Activated naive CD4-positive, alpha-beta T cell treated with anti-CD3 and anti-CD28 coated beads, Interleukin-2, amount 10 ng/mL, durations not matched to agents 7 days and 5 days (primary cell): ENCODE measurements at regions of chr20 and their contacts with region 1.

Region 1: GRCh38 chr20:13819885-13820645 is 35.2 kb downstream of the NDUFAF5 start:
- DNase-seq: peak; percentile 23
- H3K4me3 Mint-ChIP-seq: no peak overlapping the region
- H3K27ac Mint-ChIP-seq: no peak overlapping the region
- H3K4me1 Mint-ChIP-seq: no peaks in the 10 kb centered on the region
- H3K27me3 Mint-ChIP-seq: no peaks in the 10 kb centered on the region

Region 2: GRCh38 chr20:13809373-13809772 is 10.7 kb before region 1 on chr20:
- CTCF ChIA-PET with region 1: interaction called, 10 read pairs
- DNase-seq: no peak
- H3K4me3 Mint-ChIP-seq: no peak overlapping the region
- H3K27ac Mint-ChIP-seq: no peak overlapping the region
- H3K4me1 Mint-ChIP-seq: no peaks in the 10 kb centered on the region
- H3K27me3 Mint-ChIP-seq: no peaks in the 10 kb centered on the region

Region 3: GRCh38 chr20:13844296-13844695 is 24.2 kb after region 1 on chr20:
- CTCF ChIA-PET with region 1: no interaction called
- DNase-seq: no peak
- H3K4me3 Mint-ChIP-seq: no peak overlapping the region
- H3K27ac Mint-ChIP-seq: no peak overlapping the region
- H3K4me1 Mint-ChIP-seq: no peaks in the 10 kb centered on the region
- H3K27me3 Mint-ChIP-seq: peaks cover 2% of the 10 kb centered on the region